Activated B cell treated with CpG ODN at 0.5 μM for 24 hours (primary cell): ENCODE measurements at regions of chr6 and their contacts with region 1.

Region 1: DNA sequence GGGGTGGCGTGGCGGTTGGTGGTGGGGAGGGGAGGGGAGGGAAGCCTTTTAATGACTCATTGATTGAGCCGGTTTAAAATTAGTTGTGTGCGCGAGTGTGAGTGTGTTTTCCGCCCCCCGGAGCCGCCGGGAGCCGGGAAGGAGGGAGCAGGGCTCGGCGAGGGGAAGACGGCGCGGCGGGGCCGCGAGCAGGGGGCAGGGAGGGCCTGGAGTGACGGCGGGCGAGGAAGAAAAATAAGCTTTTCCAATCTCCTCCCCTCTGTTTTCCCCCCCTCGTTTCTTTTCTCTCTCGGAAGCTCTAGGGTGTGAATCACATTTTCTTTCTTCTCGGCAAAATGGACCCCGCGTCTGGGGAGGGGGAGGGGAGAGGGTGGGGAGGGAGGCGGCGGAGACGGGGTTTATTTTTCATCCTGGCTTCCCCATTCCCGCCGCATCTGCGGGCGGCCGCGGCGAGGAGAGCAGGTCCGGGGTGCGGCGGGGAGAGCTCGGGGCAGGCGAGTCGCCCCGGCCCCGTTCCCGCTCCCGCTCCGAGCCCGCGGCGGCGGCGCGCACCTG is 847 bp downstream of the BICRAL start:
- DNase-seq: peak; percentile 62
- ATAC-seq: peak; percentile 40
- H3K4me3 Mint-ChIP-seq: peak overlapping the region; percentile 97
- H3K27ac Mint-ChIP-seq: peak overlapping the region; percentile 100
- H3K4me1 Mint-ChIP-seq: peaks cover 36% of the 10 kb centered on the region
- H3K27me3 Mint-ChIP-seq: no peaks in the 10 kb centered on the region
- CTCF ChIP-seq: no peak

Region 2: GRCh38 chr6:42661540-42662153 is 121.1 kb before region 1 on chr6:
- CTCF ChIA-PET with region 1: no interaction called
- POLR2A ChIA-PET with region 1: interaction called, 16 read pairs
- intact Hi-C with region 1: no loop called
- DNase-seq: peak; percentile 65
- ATAC-seq: peak; percentile 96
- H3K4me3 Mint-ChIP-seq: no peak overlapping the region
- H3K27ac Mint-ChIP-seq: no peak overlapping the region
- H3K4me1 Mint-ChIP-seq: no peaks in the 10 kb centered on the region
- H3K27me3 Mint-ChIP-seq: no peaks in the 10 kb centered on the region
- CTCF ChIP-seq: peak; percentile 74

Region 3: DNA sequence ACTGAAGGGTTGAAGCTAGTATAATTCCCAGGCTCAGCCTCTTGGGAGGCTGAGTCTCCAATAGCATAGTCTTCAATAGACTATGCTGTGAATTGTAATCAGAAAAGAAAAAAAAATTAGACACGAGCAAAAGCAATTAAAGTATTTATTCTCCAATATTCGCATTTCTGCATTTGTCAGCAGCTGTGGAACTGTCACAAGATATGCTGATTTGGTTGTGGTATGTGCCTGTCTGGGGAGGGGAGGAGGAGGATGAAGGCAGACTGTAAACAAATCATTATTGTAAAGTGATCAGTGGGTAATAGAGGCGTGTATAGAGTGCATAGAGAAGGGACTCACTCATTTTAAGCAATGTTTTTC is 11.0 kb before region 1 on chr6:
- CTCF ChIA-PET with region 1: interaction called, 3 read pairs
- POLR2A ChIA-PET with region 1: interaction called, 389 read pairs
- intact Hi-C with region 1: loop called (anchors 1 kb)
- DNase-seq: no peak
- ATAC-seq: no peak
- H3K4me3 Mint-ChIP-seq: peak overlapping the region; percentile 85
- H3K27ac Mint-ChIP-seq: peak overlapping the region; percentile 99
- H3K4me1 Mint-ChIP-seq: peaks cover 57% of the 10 kb centered on the region
- H3K27me3 Mint-ChIP-seq: no peaks in the 10 kb centered on the region
- CTCF ChIP-seq: no peak

Region 4: DNA sequence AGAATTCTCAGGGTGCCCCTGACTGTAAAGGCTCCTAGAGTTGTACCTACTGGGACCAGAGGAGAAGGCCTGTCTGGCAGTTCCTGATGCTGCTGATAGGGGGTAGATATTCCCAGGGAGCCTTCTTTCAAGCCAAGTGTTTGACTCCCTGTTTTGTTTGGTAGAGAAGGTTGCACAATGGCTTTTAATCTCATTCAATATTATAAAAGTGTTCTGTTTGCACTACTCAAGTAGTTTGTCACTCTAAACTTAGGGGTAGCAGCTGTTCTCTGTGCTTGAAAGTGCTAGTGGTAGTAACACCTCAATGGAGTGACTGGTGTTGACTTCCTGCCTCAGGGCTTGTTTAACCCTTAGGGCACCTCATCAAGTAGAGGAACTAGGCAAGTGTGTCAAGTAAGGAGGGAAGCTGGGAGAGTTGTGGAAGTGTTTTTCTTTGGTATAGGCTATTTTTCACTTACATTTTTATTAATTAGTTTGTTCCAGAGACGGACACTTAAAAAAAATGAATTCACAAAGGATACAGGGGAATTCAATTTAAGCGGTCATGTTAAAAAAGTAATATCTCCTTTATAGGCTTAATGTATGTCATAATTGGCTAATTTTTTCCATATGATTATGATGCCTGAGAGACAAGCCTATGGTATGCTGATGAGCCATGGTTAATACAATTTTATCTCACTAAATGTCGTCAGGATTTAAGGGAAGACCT is 37.3 kb after region 1 on chr6:
- CTCF ChIA-PET with region 1: no interaction called
- POLR2A ChIA-PET with region 1: interaction called, 4 read pairs
- intact Hi-C with region 1: loop called (anchors 5 kb)
- DNase-seq: no peak
- ATAC-seq: peak; percentile 34
- H3K4me3 Mint-ChIP-seq: no peak overlapping the region
- H3K27ac Mint-ChIP-seq: peak overlapping the region; percentile 63
- H3K4me1 Mint-ChIP-seq: peaks cover 29% of the 10 kb centered on the region
- H3K27me3 Mint-ChIP-seq: no peaks in the 10 kb centered on the region
- CTCF ChIP-seq: no peak

Region 5: GRCh38 chr6:42879372-42880239 is 96.9 kb after region 1 on chr6 and contains the start of gene RPL7L1:
- CTCF ChIA-PET with region 1: no interaction called
- POLR2A ChIA-PET with region 1: interaction called, 101 read pairs
- intact Hi-C with region 1: loop called (anchors 1 kb)
- DNase-seq: peak; percentile 76
- ATAC-seq: peak; percentile 92
- H3K4me3 Mint-ChIP-seq: peak within 1 kb of the TSS; percentile 100
- H3K27ac Mint-ChIP-seq: peak within 1 kb of the TSS; percentile 99
- H3K4me1 Mint-ChIP-seq: peaks cover 28% of the 10 kb centered on the region
- H3K27me3 Mint-ChIP-seq: no peaks in the 10 kb centered on the region
- CTCF ChIP-seq: no peak
- total RNA-seq, gene RPL7L1: 94.5 and 110 TPM in 2 replicates

Region 6: GRCh38 chr6:42978839-42979522 is 196.3 kb after region 1 on chr6 and contains the start of gene PEX6:
- CTCF ChIA-PET with region 1: no interaction called
- POLR2A ChIA-PET with region 1: interaction called, 10 read pairs
- intact Hi-C with region 1: no loop called
- DNase-seq: peak; percentile 74
- ATAC-seq: peak; percentile 94
- H3K4me3 Mint-ChIP-seq: peak within 1 kb of the TSS; percentile 93
- H3K27ac Mint-ChIP-seq: peak within 1 kb of the TSS; percentile 95
- H3K4me1 Mint-ChIP-seq: peaks cover 36% of the 10 kb centered on the region
- H3K27me3 Mint-ChIP-seq: no peaks in the 10 kb centered on the region
- CTCF ChIP-seq: no peak
- total RNA-seq, gene PEX6: 11.8 and 13.2 TPM in 2 replicates

Region 7: GRCh38 chr6:43222418-43223059 is 439.8 kb after region 1 on chr6:
- CTCF ChIA-PET with region 1: no interaction called
- POLR2A ChIA-PET with region 1: interaction called, 19 read pairs
- intact Hi-C with region 1: no loop called
- DNase-seq: no peak
- ATAC-seq: no peak
- H3K4me3 Mint-ChIP-seq: no peak overlapping the region
- H3K27ac Mint-ChIP-seq: peak overlapping the region; percentile 99
- H3K4me1 Mint-ChIP-seq: peaks cover 49% of the 10 kb centered on the region
- H3K27me3 Mint-ChIP-seq: no peaks in the 10 kb centered on the region
- CTCF ChIP-seq: no peak